Posterior vena cava (tissue), 2 donors: ENCODE measurements at regions of chrX and their contacts with region 1.

Region 1: GRCh38 chrX:110412971-110413721 is 54.5 kb downstream of the RTL9 start:
- DNase-seq: peak; percentile 87

Region 2: GRCh38 chrX:110156167-110156754 is 256.9 kb before region 1 on chrX:
- intact Hi-C with region 1: loop called in 1 of 2 experiments (anchors 10 kb)
- DNase-seq: no peak

Region 3: GRCh38 chrX:110167952-110168451 is 245.1 kb before region 1 on chrX:
- intact Hi-C with region 1: loop called in 1 of 2 experiments (anchors 5 kb)
- DNase-seq: no peak

Region 4: DNA sequence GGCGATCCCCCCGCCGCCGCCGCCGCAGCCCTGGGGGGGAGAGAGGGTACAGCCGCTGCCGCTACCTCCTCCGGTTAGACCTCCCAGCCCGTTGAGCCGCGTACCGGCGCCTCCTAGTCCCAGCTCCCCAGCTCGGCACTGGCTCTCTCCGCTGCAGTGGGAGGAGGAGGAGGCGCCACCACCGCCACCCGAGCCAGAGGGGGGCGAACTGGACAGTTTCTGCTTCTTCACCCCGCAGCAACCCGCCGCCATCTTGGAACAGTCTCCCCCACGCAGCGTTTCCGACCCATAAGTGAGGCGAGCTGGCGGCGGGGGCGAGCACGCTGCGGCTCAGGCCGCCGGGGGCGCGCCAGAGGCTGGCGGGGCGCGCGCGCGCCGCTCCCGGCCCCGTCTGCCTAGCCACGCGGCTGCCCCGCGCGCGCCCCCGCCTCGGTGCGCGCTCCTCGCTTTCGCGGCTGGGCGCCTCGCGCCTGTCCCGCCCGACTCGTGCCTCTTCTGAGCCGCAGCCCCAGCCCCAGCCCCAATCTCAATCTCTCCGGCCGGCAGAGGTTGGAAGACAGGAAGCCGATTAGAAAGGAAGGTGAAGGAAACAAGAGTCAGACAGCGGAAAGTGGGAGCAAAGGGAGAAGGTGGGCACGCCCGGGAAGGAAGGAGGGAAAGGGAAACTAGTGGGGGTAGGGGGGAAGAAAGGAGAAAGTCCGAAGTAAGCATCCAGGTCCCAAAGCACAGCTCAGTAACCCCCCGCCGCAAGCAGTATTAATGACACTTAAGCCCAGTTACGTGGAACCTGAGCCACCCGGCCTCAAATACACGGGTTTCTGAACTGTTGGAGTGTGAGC is 95.1 kb before region 1 on chrX and contains the start of gene AMMECR1:
- intact Hi-C with region 1: loop called in 1 of 2 experiments (anchors 10 kb)
- DNase-seq: peak; percentile 93
- total RNA-seq, gene AMMECR1: 5.6 to 6.2 TPM